ENCODE measurements at regions of chr1 and their contacts with region 1.

Region 1: GRCh38 chr1:156591432-156592157 is at the start of gene NAXE:
- DNase-seq: peak in 34 of 35 experiments; percentile 29 to 83 (median 56)
- ATAC-seq: peak; percentile 96 to 98 (median 97)
- H3K4me3 ChIP-seq: peak within 1 kb of the TSS; percentile 77 to 89
- H3K4me3 Mint-ChIP-seq: peak within 1 kb of the TSS; percentile 77 to 86 (median 81)
- H3K27ac ChIP-seq: peak within 1 kb of the TSS; percentile 78
- H3K27ac Mint-ChIP-seq: peak within 1 kb of the TSS; percentile 91 to 95
- H3K4me1 ChIP-seq: peaks cover 12 to 23% of the 10 kb centered on the region in 2 experiments
- H3K4me1 Mint-ChIP-seq: peaks cover 16 to 26% (median 19%) of the 10 kb centered on the region in 3 donors
- H3K27me3 ChIP-seq: no peaks in the 10 kb centered on the region
- H3K27me3 Mint-ChIP-seq: no peaks in the 10 kb centered on the region
- total RNA-seq, gene NAXE: 32.4 to 47.7 (median 41.7) TPM

Region 2: DNA sequence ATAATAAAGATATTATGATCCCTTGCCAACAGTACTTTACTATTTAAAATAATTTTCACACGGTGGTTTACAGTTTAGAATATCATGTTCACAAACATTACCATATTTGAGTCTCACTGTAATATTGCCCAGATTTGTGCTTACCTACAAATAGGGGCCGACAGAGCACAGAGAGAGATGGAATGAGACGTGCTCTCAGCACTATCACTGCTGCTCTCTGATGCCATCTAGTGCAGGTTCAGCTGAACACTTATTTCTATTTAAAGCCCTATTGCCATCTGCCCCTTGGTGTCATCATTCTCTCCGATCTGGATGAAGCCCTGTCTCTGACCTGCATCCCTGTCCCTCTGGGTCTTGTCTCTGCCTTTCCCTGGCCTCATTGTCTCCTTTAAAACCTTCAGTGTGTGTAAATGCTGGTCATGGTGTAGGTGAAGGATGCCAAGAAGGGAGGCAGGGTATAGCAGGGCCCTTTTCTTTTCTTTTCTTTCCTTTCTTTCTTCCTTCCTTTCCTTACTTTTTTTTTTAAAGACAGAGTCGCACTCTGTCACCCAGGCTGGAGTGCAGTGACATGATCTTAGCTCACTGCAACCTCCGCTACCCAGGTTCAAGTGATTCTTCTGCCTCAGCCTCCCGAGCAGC is 16.6 kb after region 1 on chr1:
- CTCF ChIA-PET with region 1: interaction called, 8 to 14 read pairs
- POLR2A ChIA-PET with region 1: interaction called in 1 of 2 experiments, 3 read pairs
- DNase-seq: peak in 33 of 35 experiments; percentile 29 to 87 (median 59)
- ATAC-seq: peak; percentile 86 to 95 (median 94)
- H3K4me3 ChIP-seq: no peak overlapping the region
- H3K4me3 Mint-ChIP-seq: no peak overlapping the region
- H3K27ac ChIP-seq: no peak overlapping the region
- H3K27ac Mint-ChIP-seq: no peak overlapping the region
- H3K4me1 ChIP-seq: peaks cover 0 to 8% of the 10 kb centered on the region in 2 experiments
- H3K4me1 Mint-ChIP-seq: peaks cover 9 to 15% (median 11%) of the 10 kb centered on the region in 3 donors
- H3K27me3 ChIP-seq: peaks cover 0 to 21% of the 10 kb centered on the region in 2 experiments
- H3K27me3 Mint-ChIP-seq: peaks cover 10 to 16% of the 10 kb centered on the region in 2 donors

Measured in T-cell (primary cell).